A673 (cell line): ENCODE measurements at regions of chr1 and their contacts with region 1.

Region 1: GRCh38 chr1:170273291-170274130 is 127.8 kb downstream of the NTMT2 start:
- DNase-seq: no peak
- H3K4me3 ChIP-seq: no peak overlapping the region
- H3K27ac ChIP-seq: no peak overlapping the region
- H3K4me1 ChIP-seq: no peaks in the 10 kb centered on the region
- H3K27me3 ChIP-seq: no peaks in the 10 kb centered on the region
- CTCF ChIP-seq: no peak

Region 2: DNA sequence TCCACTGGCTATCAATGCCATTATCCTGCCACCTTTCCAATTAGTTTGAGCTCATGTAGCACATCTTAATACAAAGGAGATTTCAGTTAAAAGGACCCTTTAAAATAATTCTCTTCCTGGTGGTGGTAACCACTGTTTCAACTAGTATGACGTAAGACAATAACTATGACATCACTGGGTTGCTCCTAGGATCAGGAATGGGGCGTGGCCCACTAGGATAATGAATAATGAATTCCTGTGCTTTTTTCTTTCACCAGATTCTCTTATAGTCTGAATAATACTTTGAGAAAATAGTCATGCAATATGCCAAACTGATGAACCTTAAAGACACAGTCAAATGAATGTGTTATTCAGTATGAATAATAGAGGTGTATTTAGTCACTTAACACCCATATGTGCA is 188.4 kb before region 1 on chr1:
- CTCF ChIA-PET with region 1: no interaction called
- POLR2A ChIA-PET with region 1: no interaction called
- intact Hi-C with region 1: no loop called
- DNase-seq: peak; percentile 24
- H3K4me3 ChIP-seq: no peak overlapping the region
- H3K27ac ChIP-seq: peak overlapping the region; percentile 70
- H3K4me1 ChIP-seq: peaks cover 14% of the 10 kb centered on the region
- H3K27me3 ChIP-seq: no peaks in the 10 kb centered on the region
- CTCF ChIP-seq: no peak

Region 3: DNA sequence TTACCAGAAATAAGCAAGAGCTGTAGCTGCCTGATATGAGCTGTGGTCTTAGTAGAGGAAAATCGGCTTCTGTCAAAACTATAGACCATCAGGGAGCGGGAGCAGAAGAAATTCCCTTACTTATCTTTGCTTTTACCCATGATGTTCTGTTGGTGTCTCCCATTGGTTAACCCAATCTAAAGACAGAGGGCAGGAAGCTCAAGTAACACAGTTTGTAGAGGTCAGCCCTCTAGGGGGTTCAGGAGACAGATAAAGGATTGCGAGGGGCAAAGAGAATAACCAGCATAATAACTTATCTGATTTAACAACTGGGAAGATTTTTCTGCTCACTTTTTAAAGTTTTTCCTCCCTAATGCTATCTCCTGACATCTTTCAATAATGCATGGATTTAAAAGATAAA is 14.6 kb after region 1 on chr1:
- CTCF ChIA-PET with region 1: no interaction called
- POLR2A ChIA-PET with region 1: no interaction called
- intact Hi-C with region 1: loop called (anchors 1 kb)
- DNase-seq: no peak
- H3K4me3 ChIP-seq: no peak overlapping the region
- H3K27ac ChIP-seq: no peak overlapping the region
- H3K4me1 ChIP-seq: peaks cover 15% of the 10 kb centered on the region
- H3K27me3 ChIP-seq: no peaks in the 10 kb centered on the region
- CTCF ChIP-seq: no peak